ENCODE measurements at regions of chr1 and their contacts with region 1.

Region 1: DNA sequence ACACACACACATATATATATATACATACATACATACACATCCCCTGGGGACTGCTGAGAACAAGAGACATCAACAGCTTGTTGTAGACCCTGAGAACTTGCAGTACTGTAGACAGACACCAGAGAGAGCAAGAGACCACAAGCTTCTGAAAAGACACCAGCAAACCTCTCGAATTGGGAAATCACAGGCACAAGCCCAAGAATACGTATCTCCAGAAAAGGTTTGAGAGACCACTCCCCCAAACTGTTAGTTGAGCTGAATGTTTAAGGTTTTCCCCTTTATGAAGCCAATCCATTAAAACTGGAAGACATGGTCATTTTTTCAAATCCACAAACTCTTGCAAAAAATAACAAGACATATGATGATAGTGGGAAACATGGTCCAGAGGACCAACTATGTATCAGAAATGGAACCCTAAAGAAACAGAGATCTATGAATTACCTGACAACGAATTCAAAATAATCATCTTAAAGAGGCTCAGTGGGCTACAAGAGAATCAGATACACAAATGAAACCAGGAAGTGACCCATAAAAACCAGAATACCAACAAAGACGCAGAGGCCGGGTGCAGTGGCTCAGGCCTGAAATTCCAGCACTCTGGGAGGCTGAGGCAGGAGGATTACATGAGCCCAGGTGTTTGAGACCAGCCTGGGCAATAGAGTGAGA is 45.1 kb downstream of the SLC2A1 start:
- DNase-seq: peak in 1 of 2 donors; percentile 42
- ATAC-seq: peak; percentile 84

Region 2: DNA sequence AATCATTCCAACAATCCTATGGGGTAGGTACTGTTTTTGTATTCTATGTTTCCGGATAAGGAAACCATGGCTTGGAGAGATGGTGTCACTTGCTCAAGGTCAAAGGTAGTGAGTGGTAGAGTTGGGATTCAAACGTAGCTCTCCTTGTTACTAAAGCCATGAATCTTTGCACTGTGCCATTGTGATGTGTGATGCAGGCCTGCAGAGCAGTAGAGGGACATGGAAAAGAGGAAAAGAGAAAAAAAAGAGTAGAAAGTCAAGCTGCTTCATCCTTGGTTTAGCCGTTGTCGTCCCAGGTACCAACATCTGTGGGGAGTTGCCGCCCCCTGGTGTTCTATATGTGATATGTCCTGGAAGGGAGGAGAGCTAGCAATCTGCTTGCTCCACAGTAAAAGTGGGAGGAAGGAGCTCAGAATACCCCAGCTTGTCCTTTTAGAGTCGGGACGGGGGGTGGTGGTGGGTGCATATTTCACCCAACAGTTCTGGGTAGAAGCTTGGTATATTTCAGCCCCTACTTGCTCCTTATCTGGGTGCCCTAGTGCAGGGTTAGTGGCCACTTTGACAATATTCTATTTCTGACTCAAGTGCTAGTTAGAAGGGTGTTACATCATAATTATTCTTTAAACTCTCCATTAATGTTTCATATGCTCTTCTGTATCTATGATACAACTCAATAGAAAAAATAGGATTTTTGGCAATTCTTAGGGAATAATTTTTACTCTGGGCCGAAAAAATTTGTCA is 160.1 kb after region 1 on chr1:
- intact Hi-C with region 1: loop called (anchors 2 to 5 kb)
- DNase-seq: peak; percentile 52 to 79
- ATAC-seq: peak; percentile 95

Region 3: DNA sequence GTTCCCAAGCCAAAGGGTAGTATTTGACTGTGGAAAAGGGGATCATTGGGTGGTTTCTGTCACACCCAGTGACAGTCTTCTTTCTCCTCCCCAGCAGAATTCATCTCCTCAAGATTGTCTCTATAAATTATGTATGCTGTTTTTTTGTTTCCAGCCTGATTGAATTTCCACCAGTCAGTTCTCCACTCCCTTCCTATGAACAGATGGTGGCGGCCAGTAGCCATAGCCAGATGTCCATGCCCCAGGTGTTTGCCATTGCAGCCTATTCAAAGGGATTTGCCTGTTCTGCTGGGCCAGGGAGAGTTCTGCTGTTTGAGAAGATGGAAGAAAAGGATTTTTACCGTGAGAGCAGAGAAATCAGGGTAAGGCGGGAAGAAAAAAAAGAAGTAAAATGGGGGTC is 271.4 kb after region 1 on chr1:
- intact Hi-C with region 1: no loop called
- DNase-seq: no peak
- ATAC-seq: no peak

Measured in left colon (tissue), 2 donors.